Dorsolateral prefrontal cortex (tissue), 120 donors: ENCODE measurements at regions of chr10 and their contacts with region 1.

Region 1: GRCh38 chr10:71212318-71213126 is at the start of gene UNC5B:
- DNase-seq: peak; percentile 80 to 97 (median 90)
- H3K4me3 ChIP-seq: peak within 1 kb of the TSS; percentile 67 to 97 (median 89)
- H3K27ac ChIP-seq: peak within 1 kb of the TSS; percentile 66 to 97 (median 92)
- H3K27me3 ChIP-seq: no peaks in the 10 kb centered on the region
- CTCF ChIP-seq: peak in 50 of 56 donors; percentile 13 to 76 (median 44)
- total RNA-seq, gene UNC5B: 12.3 to 77.7 (median 23.7) TPM

Region 2: DNA sequence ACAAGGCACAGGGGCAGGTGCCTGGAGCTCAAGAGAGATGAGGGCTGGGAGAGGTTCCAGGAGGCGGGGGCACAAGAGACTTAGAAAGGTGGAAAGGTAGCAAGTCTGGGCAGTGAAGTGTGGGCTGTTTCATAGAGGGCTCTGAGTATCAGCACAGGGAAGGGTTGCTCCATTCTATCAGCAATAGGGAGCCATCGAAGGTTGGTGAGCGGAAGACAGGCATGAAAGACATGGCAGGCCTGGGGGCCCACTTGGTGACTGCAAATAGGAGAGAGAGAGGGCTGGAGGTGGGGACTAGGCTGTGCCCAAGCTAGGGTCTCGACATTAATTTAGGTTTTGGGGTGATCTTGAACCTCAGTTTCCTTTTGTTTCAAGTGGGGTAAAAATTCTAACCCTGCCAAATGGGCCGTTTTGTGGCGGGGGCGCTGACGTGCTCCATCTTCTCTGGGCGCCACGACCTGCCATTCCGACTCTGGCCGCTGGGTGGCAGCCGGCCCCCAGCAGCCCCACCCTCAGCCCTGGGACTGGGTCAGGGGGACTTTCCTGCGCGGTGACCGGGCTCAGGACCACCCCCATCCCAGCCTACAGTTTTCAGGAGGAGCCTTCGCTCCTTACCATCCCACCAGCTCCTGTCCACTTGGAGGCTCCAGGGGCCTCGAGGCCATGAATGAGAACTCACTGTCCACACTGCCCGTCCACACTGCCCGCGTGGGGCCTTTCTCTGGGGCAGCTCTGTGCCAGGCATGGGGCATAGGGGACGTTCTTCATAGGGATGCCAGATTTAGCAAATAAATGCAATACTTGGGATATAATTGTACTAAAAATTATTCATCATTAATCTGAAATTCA is 286.9 kb before region 1 on chr10:
- intact Hi-C with region 1: loop called (anchors 1 kb)
- DNase-seq: peak in 7 of 10 donors; percentile 30 to 76 (median 45)
- H3K4me3 ChIP-seq: no peak overlapping the region
- H3K27ac ChIP-seq: peak overlapping the region in 1 of 59 donors; percentile 83
- H3K27me3 ChIP-seq: no peaks in the 10 kb centered on the region
- CTCF ChIP-seq: peak; percentile 76 to 97 (median 92)

Region 3: DNA sequence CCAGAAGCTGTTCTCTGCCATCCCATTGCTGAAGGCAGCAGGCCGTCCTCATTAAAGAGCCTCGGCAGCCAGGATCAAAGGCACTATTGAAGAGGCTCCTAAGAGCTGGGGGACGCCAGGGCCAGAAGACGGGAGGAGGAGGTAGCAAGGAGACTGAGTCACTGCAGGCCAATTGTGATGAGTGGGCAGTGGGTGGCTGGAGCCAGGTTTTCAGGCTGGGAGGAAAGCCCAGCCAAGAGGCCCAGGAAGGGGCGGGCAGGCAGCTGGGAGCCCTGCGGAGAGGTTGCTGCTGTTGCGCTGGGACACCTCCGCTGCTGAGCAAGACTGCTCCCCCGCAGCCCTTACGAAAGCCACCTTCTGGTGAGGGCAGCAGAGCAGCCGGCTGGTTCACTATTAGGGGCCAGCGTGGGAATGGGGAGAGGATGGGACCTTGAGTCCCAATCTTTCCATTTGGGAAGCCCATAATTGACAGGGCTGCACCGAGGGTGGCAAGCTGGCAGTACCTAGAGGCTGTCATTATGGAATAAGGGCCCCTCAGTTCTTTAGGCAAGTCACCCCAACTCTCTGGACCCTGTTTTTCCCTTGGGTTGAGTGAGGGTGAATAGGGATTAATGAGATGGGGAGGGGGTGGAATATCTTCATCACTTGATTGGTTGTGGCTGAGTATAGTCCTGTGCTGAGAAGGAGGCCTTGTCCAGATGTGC is 48.3 kb after region 1 on chr10:
- intact Hi-C with region 1: loop called in 1 of 2 experiments (anchors 2 kb)
- DNase-seq: peak in 8 of 10 donors; percentile 52 to 91 (median 78)
- H3K4me3 ChIP-seq: peak overlapping the region in 7 of 59 donors; percentile 1 to 33 (median 11)
- H3K27ac ChIP-seq: peak overlapping the region; percentile 17 to 94 (median 84)
- H3K27me3 ChIP-seq: no peaks in the 10 kb centered on the region
- CTCF ChIP-seq: peak in 7 of 56 donors; percentile 3 to 11 (median 9)

Region 4: GRCh38 chr10:71285180-71285545 is 72.6 kb after region 1 on chr10:
- intact Hi-C with region 1: loop called (anchors 1 to 5 kb)
- DNase-seq: peak in 9 of 10 donors; percentile 54 to 83 (median 62)
- H3K4me3 ChIP-seq: no peak overlapping the region
- H3K27ac ChIP-seq: peak overlapping the region in 5 of 59 donors; percentile 3 to 69 (median 29)
- H3K27me3 ChIP-seq: no peaks in the 10 kb centered on the region
- CTCF ChIP-seq: peak; percentile 61 to 94 (median 85)